Transverse colon (tissue), 4 donors: ENCODE measurements at regions of chr3 and their contacts with region 1.

Region 1: DNA sequence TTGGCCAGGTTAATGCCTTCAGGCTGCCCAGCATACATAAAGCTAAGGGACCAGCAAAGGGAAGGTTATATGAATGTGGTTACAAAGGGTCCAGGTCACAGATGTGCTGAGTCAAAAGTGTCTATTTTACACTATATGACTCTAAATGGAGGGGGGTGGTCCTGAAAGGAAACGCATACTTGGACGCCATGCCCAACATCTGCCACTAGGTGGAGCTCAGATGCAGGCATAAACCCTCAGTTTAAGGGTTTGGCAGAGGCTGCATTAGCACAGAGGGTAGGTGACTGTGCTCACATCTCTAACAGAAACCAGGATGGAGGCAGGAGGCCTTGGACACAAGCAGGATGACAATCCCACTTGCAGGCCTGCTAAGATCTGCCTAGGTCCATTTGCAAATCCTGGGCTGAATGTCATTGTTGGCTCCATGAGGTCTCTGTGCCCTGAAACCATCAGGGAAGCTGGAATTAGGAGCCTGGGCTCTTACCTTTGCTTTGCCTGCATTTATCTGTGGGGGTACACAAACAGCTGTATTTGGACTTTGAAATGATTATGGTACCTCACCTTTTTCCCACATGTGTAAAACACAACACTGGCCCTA is 55.8 kb downstream of the ZNF621 start:
- DNase-seq: peak; percentile 54
- H3K4me3 ChIP-seq: no peak overlapping the region
- H3K27ac ChIP-seq: no peak overlapping the region
- H3K4me1 ChIP-seq: peaks cover 0 to 8% (median 0%) of the 10 kb centered on the region in 4 donors
- H3K27me3 ChIP-seq: no peaks in the 10 kb centered on the region
- CTCF ChIP-seq: peak; percentile 78 to 93 (median 91)
- EP300 ChIP-seq: no peak
- POLR2A ChIP-seq: no peak

Region 2: GRCh38 chr3:40337136-40338108 is 243.2 kb before region 1 on chr3:
- in situ Hi-C with region 1: loop called in 1 of 4 experiments (anchors 25 kb)
- intact Hi-C with region 1: no loop called
- DNase-seq: no peak
- H3K4me3 ChIP-seq: no peak overlapping the region
- H3K27ac ChIP-seq: no peak overlapping the region
- H3K4me1 ChIP-seq: no peaks in the 10 kb centered on the region
- H3K27me3 ChIP-seq: no peaks in the 10 kb centered on the region
- CTCF ChIP-seq: no peak
- EP300 ChIP-seq: no peak
- POLR2A ChIP-seq: no peak

Region 3: DNA sequence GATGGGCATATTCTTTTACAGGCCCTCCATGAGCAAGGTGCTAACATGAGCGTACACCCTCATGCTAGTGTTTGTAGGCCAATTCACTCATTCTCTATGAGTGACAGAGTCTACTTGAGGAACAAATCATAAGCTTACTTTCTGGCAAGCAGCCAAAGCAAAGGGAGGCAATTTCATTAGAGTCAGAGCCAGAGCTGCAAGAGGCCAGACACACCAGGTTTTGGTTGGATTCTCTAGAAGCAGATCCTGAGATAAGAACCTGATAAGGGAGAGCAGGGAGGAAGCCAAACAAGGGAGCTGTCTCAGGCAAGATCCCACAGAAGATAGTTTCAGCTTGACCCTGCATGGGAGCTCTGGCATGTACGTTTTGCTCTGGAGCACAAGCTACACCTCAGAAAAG is 404.6 kb after region 1 on chr3:
- in situ Hi-C with region 1: loop called in 1 of 4 experiments (anchors 25 kb)
- intact Hi-C with region 1: no loop called
- DNase-seq: peak; percentile 21
- H3K4me3 ChIP-seq: no peak overlapping the region
- H3K27ac ChIP-seq: no peak overlapping the region
- H3K4me1 ChIP-seq: no peaks in the 10 kb centered on the region
- H3K27me3 ChIP-seq: no peaks in the 10 kb centered on the region
- CTCF ChIP-seq: no peak
- EP300 ChIP-seq: no peak
- POLR2A ChIP-seq: no peak

Region 4: DNA sequence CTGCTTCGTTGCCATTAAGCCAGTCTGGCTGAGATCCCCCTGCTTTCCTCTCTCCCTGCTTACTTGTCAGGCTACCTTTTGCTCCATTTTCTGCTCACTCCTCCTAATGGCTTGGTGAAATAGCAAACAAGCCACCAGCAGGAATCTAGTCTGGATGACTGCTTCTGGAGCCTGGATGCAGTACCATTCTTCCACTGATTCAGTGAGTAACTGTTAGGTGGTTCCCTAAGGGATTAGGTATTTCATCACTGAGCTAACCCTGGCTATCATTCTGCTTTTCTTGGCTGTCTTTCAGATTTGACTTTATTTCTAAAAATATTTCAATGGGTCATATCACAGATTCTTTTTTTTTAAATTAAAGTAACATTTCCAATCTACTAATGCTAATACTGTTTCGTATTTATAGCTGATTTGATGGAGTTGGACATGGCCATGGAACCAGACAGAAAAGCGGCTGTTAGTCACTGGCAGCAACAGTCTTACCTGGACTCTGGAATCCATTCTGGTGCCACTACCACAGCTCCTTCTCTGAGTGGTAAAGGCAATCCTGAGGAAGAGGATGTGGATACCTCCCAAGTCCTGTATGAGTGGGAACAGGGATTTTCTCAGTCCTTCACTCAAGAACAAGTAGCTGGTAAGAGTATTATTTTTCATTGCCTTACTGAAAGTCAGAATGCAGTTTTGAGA is 643.7 kb after region 1 on chr3:
- in situ Hi-C with region 1: loop called in 3 of 4 experiments (anchors 10 to 25 kb)
- intact Hi-C with region 1: no loop called
- DNase-seq: no peak
- H3K4me3 ChIP-seq: no peak overlapping the region
- H3K27ac ChIP-seq: peak overlapping the region in 2 of 4 donors; percentile 4 to 5
- H3K4me1 ChIP-seq: peaks cover 9 to 48% (median 30%) of the 10 kb centered on the region in 4 donors
- H3K27me3 ChIP-seq: no peaks in the 10 kb centered on the region
- CTCF ChIP-seq: no peak
- EP300 ChIP-seq: no peak
- POLR2A ChIP-seq: no peak

Region 5: GRCh38 chr3:41872157-41872556 is 1291.6 kb after region 1 on chr3:
- in situ Hi-C with region 1: loop called in 2 of 4 experiments (anchors 5 to 10 kb)
- intact Hi-C with region 1: loop called (anchors 5 kb)
- DNase-seq: no peak
- H3K4me3 ChIP-seq: no peak overlapping the region
- H3K27ac ChIP-seq: peak overlapping the region in 1 of 4 donors; percentile 14
- H3K4me1 ChIP-seq: no peaks in the 10 kb centered on the region
- H3K27me3 ChIP-seq: no peaks in the 10 kb centered on the region
- CTCF ChIP-seq: no peak
- EP300 ChIP-seq: no peak
- POLR2A ChIP-seq: no peak